Endothelial cell of umbilical vein (primary cell): ENCODE measurements at regions of chr10 and their contacts with region 1.

Region 1: GRCh38 chr10:46282842-46283574 is 3.8 kb upstream of the ANTXRL start:
- DNase-seq: peak; percentile 36
- H3K4me3 ChIP-seq: peak overlapping the region in 1 of 3 experiments; percentile 39
- H3K27ac ChIP-seq: no peak overlapping the region
- H3K4me1 ChIP-seq: peaks cover 4% of the 10 kb centered on the region
- H3K27me3 ChIP-seq: peaks cover 9% of the 10 kb centered on the region in 2 experiments
- CTCF ChIP-seq: no peak
- POLR2A ChIP-seq: no peak

Region 2: GRCh38 chr10:46091080-46091827 is 191.8 kb before region 1 on chr10:
- CTCF ChIA-PET with region 1: no interaction called
- POLR2A ChIA-PET with region 1: no interaction called
- dilution Hi-C with region 1: no loop called
- intact Hi-C with region 1: no loop called
- DNase-seq: no peak
- H3K4me3 ChIP-seq: no peak overlapping the region
- H3K27ac ChIP-seq: no peak overlapping the region
- H3K4me1 ChIP-seq: no peaks in the 10 kb centered on the region
- H3K27me3 ChIP-seq: no peaks in the 10 kb centered on the region
- CTCF ChIP-seq: no peak
- POLR2A ChIP-seq: no peak

Region 3: DNA sequence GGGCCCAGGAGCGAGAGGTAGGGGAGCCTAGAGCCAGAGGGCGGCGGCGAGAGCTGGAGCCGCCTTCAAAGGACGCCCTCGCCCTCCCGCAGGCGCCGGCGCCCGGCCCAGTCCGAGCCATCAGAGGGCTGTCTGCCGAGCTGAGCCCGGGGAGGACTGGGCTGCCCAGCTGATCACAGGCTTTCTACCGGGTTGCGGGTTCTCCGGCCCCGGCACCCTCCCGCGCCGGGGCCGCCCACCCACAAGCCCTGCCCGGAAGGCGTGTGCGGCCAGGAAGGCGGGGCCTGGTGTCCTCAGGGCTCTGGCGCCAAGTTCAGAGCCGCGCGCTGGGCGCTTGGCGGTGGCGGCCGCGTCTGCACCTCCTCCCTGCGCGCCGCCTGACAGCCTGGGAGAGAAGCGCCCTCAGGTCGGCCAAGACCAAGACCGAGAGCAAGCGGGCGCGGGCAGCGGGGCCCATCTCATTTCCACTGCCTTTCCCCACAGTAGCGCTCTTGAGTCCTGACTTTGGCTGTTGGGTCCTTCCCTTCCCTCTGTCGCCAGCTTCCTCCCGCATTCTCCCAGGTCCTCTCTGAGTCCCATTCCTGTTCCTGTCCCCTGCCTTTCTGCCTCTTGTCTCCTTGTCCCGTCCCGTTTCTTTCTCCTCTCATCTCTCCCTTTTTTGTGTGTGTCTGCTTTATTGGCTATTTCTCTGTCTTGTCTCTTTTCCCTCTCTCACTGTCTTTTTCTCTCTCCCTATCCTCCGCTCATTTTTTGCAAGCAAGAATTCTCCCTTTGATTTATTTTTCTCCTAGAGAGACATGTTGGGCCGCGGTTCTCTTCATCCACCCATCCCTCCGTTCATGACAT is 176.4 kb before region 1 on chr10:
- CTCF ChIA-PET with region 1: interaction called, 10 read pairs
- POLR2A ChIA-PET with region 1: interaction called, 4 read pairs
- dilution Hi-C with region 1: no loop called
- intact Hi-C with region 1: no loop called
- DNase-seq: peak; percentile 34
- H3K4me3 ChIP-seq: peak overlapping the region; percentile 11 to 57 (median 35)
- H3K27ac ChIP-seq: no peak overlapping the region
- H3K4me1 ChIP-seq: peaks cover 3% of the 10 kb centered on the region
- H3K27me3 ChIP-seq: peaks cover 9 to 11% of the 10 kb centered on the region in 2 experiments
- CTCF ChIP-seq: no peak
- POLR2A ChIP-seq: no peak

Region 4: GRCh38 chr10:46268076-46268881 is 14.7 kb before region 1 on chr10:
- CTCF ChIA-PET with region 1: no interaction called
- POLR2A ChIA-PET with region 1: no interaction called
- dilution Hi-C with region 1: no loop called
- intact Hi-C with region 1: no loop called
- DNase-seq: no peak
- H3K4me3 ChIP-seq: no peak overlapping the region
- H3K27ac ChIP-seq: no peak overlapping the region
- H3K4me1 ChIP-seq: no peaks in the 10 kb centered on the region
- H3K27me3 ChIP-seq: no peaks in the 10 kb centered on the region
- CTCF ChIP-seq: no peak
- POLR2A ChIP-seq: no peak